ENCODE measurements at regions of chr3 and their contacts with region 1.

Region 1: GRCh38 chr3:49703443-49703927 is 14.1 kb downstream of the RNF123 start:
- DNase-seq: peak; percentile 64 to 84 (median 78)
- H3K4me3 ChIP-seq: no peak overlapping the region
- H3K27ac ChIP-seq: no peak overlapping the region
- H3K4me1 ChIP-seq: peaks cover 0 to 4% (median 3%) of the 10 kb centered on the region in 4 experiments
- H3K27me3 ChIP-seq: no peaks in the 10 kb centered on the region

Region 2: GRCh38 chr3:49719214-49719884 is 15.9 kb after region 1 on chr3 and contains the start of gene AMIGO3:
- CTCF ChIA-PET with region 1: interaction called, 18 read pairs
- POLR2A ChIA-PET with region 1: no interaction called
- DNase-seq: peak; percentile 90 to 94 (median 92)
- H3K4me3 ChIP-seq: peak within 1 kb of the TSS; percentile 45 to 94 (median 78)
- H3K27ac ChIP-seq: no peak within 1 kb of the TSS
- H3K4me1 ChIP-seq: peaks cover 0 to 39% (median 26%) of the 10 kb centered on the region in 4 experiments
- H3K27me3 ChIP-seq: no peaks in the 10 kb centered on the region